B cell (primary cell): ENCODE measurements at regions of chr7 and their contacts with region 1.

Region 1: DNA sequence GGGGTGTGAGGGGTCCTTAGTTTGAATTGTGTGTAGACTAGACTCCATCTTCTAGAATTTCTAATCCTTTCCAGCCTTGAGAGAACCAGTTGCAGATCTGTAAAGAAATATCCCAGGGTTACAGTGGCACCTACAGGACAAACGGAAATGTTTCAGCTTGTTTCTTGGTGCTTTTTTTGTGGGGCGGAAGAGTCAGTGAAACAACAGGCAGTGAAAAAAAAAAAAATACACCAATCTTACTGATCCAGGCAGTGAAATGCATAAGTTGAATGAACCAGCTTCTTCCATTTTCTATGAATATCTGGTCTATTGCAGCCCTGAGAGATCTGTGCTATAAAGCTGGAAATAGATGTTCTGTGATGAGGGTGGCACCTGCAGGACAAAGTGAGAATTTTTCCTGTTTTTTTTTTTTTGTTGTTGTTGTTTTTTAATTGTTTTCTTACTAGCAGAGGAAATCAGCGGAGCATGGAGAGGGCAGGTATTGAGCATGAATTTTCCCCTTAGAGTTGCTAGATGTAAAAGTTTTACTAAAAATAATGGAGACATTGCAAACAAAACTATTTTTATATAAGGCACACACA is 81.9 kb upstream of the DYNC1I1 start:
- DNase-seq: peak; percentile 68
- ATAC-seq: peak; percentile 59
- H3K4me3 ChIP-seq: no peak overlapping the region
- H3K4me3 Mint-ChIP-seq: peak overlapping the region; percentile 25
- H3K27ac ChIP-seq: no peak overlapping the region
- H3K27ac Mint-ChIP-seq: no peak overlapping the region
- H3K4me1 ChIP-seq: peaks cover 0 to 4% of the 10 kb centered on the region in 2 donors
- H3K4me1 Mint-ChIP-seq: peaks cover 5% of the 10 kb centered on the region
- H3K27me3 ChIP-seq: no peaks in the 10 kb centered on the region
- H3K27me3 Mint-ChIP-seq: peaks cover 9% of the 10 kb centered on the region
- CTCF ChIP-seq: peak; percentile 83

Region 2: DNA sequence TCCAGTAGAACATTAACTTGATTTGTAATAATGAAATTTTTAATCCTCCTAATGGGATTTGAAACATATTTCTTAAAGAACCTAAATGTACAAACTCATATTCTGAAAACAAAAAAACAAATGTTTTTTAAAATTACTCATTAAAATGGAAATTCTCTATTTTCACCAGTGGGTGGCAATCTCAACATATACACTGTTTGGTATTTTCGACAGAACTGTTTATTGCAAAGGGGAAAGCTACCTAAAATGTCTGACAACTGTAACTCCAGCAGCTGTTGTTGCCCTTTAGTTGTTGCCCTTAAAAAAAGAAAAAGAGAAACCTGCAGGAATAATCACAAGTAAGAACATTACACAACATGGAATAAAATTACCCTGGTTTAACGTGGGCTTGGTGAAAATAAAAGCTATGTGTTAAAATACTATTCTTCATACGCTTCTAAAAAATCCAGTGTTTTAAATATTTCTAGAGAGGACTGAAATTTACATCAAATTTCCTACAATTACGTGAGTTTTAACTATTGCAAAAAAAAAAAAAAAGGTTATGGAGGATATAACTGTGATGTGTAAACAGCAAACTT is 1241.2 kb before region 1 on chr7:
- CTCF ChIA-PET with region 1: interaction called, 35 read pairs
- POLR2A ChIA-PET with region 1: no interaction called
- intact Hi-C with region 1: loop called (anchors 1 kb)
- DNase-seq: peak; percentile 54
- ATAC-seq: no peak
- H3K4me3 ChIP-seq: no peak overlapping the region
- H3K4me3 Mint-ChIP-seq: no peak overlapping the region
- H3K27ac ChIP-seq: no peak overlapping the region
- H3K27ac Mint-ChIP-seq: no peak overlapping the region
- H3K4me1 ChIP-seq: no peaks in the 10 kb centered on the region
- H3K4me1 Mint-ChIP-seq: no peaks in the 10 kb centered on the region
- H3K27me3 ChIP-seq: peaks cover 0 to 6% (median 0%) of the 10 kb centered on the region in 4 experiments
- H3K27me3 Mint-ChIP-seq: peaks cover 10% of the 10 kb centered on the region
- CTCF ChIP-seq: peak; percentile 83

Region 3: DNA sequence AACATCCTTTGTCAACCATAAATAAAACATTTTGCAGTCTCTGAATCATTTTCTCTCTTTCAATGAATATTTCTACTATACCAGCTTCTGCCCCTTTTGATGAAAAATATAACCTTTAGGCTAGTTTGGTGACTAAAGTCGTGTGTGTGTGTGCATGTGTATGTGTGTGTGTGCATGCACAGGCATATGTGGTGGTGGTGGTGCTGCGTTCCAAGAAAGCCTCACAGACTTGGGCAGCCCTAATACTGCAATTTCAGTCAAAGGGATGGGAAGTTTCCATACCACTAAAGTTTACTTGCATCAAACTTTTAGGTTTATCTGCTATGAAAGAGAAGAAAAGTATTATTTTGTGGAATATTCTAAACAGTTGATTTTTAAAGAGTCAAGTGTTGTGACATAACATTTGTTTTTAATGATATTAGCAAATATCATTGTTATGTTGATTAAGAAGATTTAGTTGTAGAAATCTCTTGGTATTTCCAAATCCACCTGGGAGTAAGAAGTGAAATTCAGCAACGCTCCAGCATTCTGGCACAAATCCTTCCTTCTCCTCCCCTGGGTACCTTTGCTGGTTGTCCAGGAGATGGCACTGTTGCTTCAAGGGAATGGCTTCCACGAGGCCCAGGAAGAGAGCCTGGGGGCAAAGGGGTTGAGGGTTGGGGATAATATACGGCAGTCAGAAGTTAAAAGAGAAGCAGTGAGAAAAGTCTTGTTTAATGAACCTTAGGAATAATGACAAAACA is 163.3 kb before region 1 on chr7:
- CTCF ChIA-PET with region 1: interaction called, 681 read pairs
- POLR2A ChIA-PET with region 1: interaction called, 3 read pairs
- intact Hi-C with region 1: loop called (anchors 1 kb)
- DNase-seq: peak; percentile 69
- ATAC-seq: peak; percentile 69
- H3K4me3 ChIP-seq: no peak overlapping the region
- H3K4me3 Mint-ChIP-seq: no peak overlapping the region
- H3K27ac ChIP-seq: no peak overlapping the region
- H3K27ac Mint-ChIP-seq: no peak overlapping the region
- H3K4me1 ChIP-seq: no peaks in the 10 kb centered on the region
- H3K4me1 Mint-ChIP-seq: peaks cover 3% of the 10 kb centered on the region
- H3K27me3 ChIP-seq: no peaks in the 10 kb centered on the region
- H3K27me3 Mint-ChIP-seq: peaks cover 8% of the 10 kb centered on the region
- CTCF ChIP-seq: peak; percentile 91

Region 4: DNA sequence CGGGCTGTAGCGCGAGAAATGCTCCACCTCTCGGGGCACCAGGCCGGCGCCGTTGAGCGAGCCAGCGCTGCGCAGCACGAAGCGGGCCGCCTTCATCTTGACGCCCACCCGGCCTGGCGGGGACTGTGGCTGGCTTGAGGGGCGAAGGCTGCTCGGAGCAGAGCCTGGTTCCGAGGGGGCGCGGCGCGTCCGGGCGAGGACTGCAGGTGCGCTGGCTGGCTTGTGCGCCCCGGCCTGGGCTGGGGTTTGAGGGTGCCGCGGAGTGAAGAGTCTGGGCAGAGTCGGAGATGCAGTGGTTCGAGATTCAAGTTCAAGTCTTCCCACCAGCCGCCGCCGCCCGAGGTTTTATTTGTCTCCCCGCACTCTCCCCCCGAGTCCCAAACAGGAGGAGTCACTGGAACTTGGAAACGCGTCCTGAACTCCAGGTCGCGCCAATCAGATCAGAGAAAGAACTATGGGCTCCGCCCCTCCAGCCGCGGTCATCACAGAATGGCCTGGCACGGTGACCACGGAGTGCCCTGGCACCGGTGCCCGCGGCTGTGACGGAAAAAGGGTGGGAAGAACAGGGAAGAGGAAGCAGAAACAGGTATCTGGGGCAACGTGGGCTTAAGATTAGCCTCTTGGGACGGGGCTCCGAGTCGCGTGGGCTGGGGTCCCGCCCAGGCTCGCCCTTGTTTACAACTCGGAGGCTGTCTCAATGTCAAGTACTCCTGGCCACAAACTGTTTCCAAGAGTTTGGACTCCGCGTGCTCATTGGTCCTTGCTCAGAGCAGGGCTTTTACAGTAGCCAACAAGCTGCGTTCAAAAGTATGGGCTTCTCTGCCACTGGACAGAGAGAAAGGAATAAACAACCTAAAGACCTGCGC is 94.0 kb before region 1 on chr7 and contains the start of gene PDK4:
- CTCF ChIA-PET with region 1: interaction called, 15 read pairs
- POLR2A ChIA-PET with region 1: no interaction called
- intact Hi-C with region 1: no loop called
- DNase-seq: peak; percentile 34
- ATAC-seq: peak; percentile 68
- H3K4me3 ChIP-seq: peak within 1 kb of the TSS; percentile 8 to 73 (median 60)
- H3K4me3 Mint-ChIP-seq: peak within 1 kb of the TSS; percentile 96
- H3K27ac ChIP-seq: peak within 1 kb of the TSS; percentile 38 to 53
- H3K27ac Mint-ChIP-seq: peak within 1 kb of the TSS; percentile 87
- H3K4me1 ChIP-seq: peaks cover 15 to 20% of the 10 kb centered on the region in 2 donors
- H3K4me1 Mint-ChIP-seq: peaks cover 31% of the 10 kb centered on the region
- H3K27me3 ChIP-seq: peaks cover 0 to 6% (median 0%) of the 10 kb centered on the region in 4 experiments
- H3K27me3 Mint-ChIP-seq: peaks cover 12% of the 10 kb centered on the region
- CTCF ChIP-seq: no peak
- total RNA-seq, gene PDK4: 6.8 and 7.1 TPM in 2 replicates

Region 5: GRCh38 chr7:95700917-95701316 is 10.5 kb after region 1 on chr7:
- CTCF ChIA-PET with region 1: interaction called, 10 read pairs
- POLR2A ChIA-PET with region 1: interaction called, 4 read pairs
- intact Hi-C with region 1: no loop called
- DNase-seq: no peak
- ATAC-seq: no peak
- H3K4me3 ChIP-seq: no peak overlapping the region
- H3K4me3 Mint-ChIP-seq: no peak overlapping the region
- H3K27ac ChIP-seq: no peak overlapping the region
- H3K27ac Mint-ChIP-seq: no peak overlapping the region
- H3K4me1 ChIP-seq: no peaks in the 10 kb centered on the region
- H3K4me1 Mint-ChIP-seq: no peaks in the 10 kb centered on the region
- H3K27me3 ChIP-seq: peaks cover 0 to 25% (median 3%) of the 10 kb centered on the region in 4 experiments
- H3K27me3 Mint-ChIP-seq: peaks cover 30% of the 10 kb centered on the region
- CTCF ChIP-seq: no peak